ENCODE measurements at regions of chr11 and their contacts with region 1.

Region 1: GRCh38 chr11:10730151-10730550 is 20.9 kb upstream of the CTR9 start:
- DNase-seq: no peak
- ATAC-seq: no peak

Region 2: GRCh38 chr11:10405855-10406592 is 324.1 kb before region 1 on chr11:
- intact Hi-C with region 1: loop called (anchors 2 to 5 kb)
- DNase-seq: peak; percentile 77
- ATAC-seq: peak; percentile 93

Region 3: GRCh38 chr11:10413268-10413667 is 316.9 kb before region 1 on chr11:
- intact Hi-C with region 1: loop called (anchors 2 to 5 kb)
- DNase-seq: no peak
- ATAC-seq: peak; percentile 33 to 45

Region 4: DNA sequence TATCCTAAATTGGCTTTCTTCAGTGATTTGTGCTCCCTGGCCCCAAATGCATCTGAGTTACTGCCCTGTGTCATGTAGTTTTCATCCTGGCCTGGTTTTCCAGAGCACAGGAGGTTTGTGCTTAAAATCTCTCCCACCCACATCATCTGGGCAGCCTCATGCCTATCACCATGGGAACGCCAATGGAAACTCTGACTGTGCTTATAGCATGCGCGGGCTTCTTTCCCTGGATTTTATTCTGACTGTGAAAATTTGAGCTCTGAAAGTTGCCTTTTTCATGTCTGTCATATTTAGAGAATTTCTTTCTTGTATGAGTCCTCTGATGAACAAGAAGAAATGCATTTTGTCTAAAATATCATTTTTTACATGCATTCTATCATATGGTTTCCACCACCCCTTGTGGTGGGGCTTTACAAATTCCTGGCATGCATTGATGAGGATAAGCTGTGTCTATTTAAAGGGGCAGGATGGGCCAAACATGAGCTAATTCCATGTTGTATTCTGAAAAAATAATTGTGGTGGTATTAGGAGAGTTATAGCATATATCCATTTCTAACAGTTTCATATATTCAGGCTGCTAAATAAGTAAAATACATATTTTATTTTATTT is 91.7 kb before region 1 on chr11:
- intact Hi-C with region 1: no loop called
- DNase-seq: no peak
- ATAC-seq: peak; percentile 43 to 55

Measured in left cardiac atrium (tissue), 4 donors.